GM12878 (cell line): ENCODE measurements at regions of chr11 and their contacts with region 1.

Region 1: GRCh38 chr11:72030472-72031045 is 31.9 kb downstream of the IL18BP start:
- DNase-seq: no peak
- ATAC-seq: no peak
- H3K4me3 ChIP-seq: no peak overlapping the region
- H3K27ac ChIP-seq: no peak overlapping the region
- H3K4me1 ChIP-seq: no peaks in the 10 kb centered on the region
- H3K27me3 ChIP-seq: no peaks in the 10 kb centered on the region
- CTCF ChIP-seq: no peak
- EP300 ChIP-seq: no peak
- POLR2A ChIP-seq: no peak
- RAD21 ChIP-seq: no peak

Region 2: DNA sequence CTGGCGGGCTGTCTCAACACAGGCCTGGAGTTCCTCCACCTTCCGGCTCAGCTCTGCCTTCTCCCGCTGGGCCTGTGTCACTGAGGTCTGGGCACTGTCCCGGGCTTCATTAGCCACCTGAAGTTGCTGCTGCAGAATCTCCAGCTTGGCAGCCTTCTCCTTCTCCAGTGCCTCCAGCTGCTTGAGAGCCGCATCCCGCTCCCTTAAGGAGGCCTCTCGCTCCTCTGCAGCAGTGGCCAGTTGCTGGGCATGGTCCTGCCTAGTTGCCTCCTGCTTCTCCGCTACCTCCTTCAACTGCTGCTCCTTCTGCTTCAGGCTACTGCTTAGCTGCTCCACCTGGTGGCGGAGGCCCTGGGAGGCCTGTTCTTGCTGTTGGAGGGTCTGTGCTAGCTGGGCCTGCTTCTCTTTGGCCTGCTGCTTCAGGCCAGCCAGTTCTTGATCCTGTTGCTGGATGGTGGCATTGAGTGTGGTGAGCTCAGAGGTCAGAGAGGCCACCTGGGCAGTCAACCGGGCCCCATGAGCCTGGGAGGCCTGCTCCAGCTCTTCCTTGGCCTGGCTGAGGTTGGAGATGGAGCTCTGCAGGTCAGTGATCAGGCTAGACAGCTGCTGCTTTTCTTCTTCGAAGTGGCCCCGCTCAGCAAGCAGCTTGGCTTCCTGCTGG is 14.9 kb before region 1 on chr11:
- CTCF ChIA-PET with region 1: interaction called, 16 read pairs
- POLR2A ChIA-PET with region 1: no interaction called
- RAD21 ChIA-PET with region 1: interaction called, 5 read pairs
- SMC1A ChIA-PET with region 1: interaction called, 15 read pairs
- in situ Hi-C with region 1: no loop called
- intact Hi-C with region 1: no loop called
- DNase-seq: no peak
- ATAC-seq: peak; percentile 65
- H3K4me3 ChIP-seq: no peak overlapping the region
- H3K27ac ChIP-seq: no peak overlapping the region
- H3K4me1 ChIP-seq: no peaks in the 10 kb centered on the region
- H3K27me3 ChIP-seq: no peaks in the 10 kb centered on the region
- CTCF ChIP-seq: peak; percentile 40 to 72 (median 62); a peak in 5 of 6 replicates
- EP300 ChIP-seq: no peak
- POLR2A ChIP-seq: no peak
- RAD21 ChIP-seq: peak; percentile 55

Region 3: GRCh38 chr11:72080256-72080974 is 49.9 kb after region 1 on chr11 and contains the starts of genes LRRC51 and NUMA1:
- CTCF ChIA-PET with region 1: interaction called, 43 read pairs
- POLR2A ChIA-PET with region 1: interaction called, 14 read pairs
- RAD21 ChIA-PET with region 1: interaction called, 30 read pairs
- SMC1A ChIA-PET with region 1: interaction called, 62 read pairs
- in situ Hi-C with region 1: no loop called
- intact Hi-C with region 1: no loop called
- DNase-seq: peak; percentile 99
- ATAC-seq: peak; percentile 97
- H3K4me3 ChIP-seq: peak within 1 kb of the TSS; percentile 77
- H3K27ac ChIP-seq: peak within 1 kb of the TSS; percentile 78
- H3K4me1 ChIP-seq: peaks cover 16% of the 10 kb centered on the region
- H3K27me3 ChIP-seq: no peaks in the 10 kb centered on the region
- CTCF ChIP-seq: no peak
- EP300 ChIP-seq: no peak
- POLR2A ChIP-seq: peak; percentile 83
- RAD21 ChIP-seq: no peak
- polyA plus RNA-seq, gene LRRC51: 4.7 to 6.2 TPM
- polyA plus RNA-seq, gene NUMA1: 5.5 to 7.1 TPM

Region 4: GRCh38 chr11:72102946-72103753 is 72.6 kb after region 1 on chr11 and contains the start of gene LAMTOR1:
- CTCF ChIA-PET with region 1: interaction called, 416 read pairs
- POLR2A ChIA-PET with region 1: interaction called, 4 read pairs
- RAD21 ChIA-PET with region 1: interaction called, 4 read pairs
- SMC1A ChIA-PET with region 1: interaction called, 245 read pairs
- in situ Hi-C with region 1: no loop called
- intact Hi-C with region 1: no loop called
- DNase-seq: peak; percentile 97
- ATAC-seq: peak; percentile 97
- H3K4me3 ChIP-seq: peak within 1 kb of the TSS; percentile 94
- H3K27ac ChIP-seq: peak within 1 kb of the TSS; percentile 90
- H3K4me1 ChIP-seq: peaks cover 21% of the 10 kb centered on the region
- H3K27me3 ChIP-seq: no peaks in the 10 kb centered on the region
- CTCF ChIP-seq: peak; percentile 20 to 48 (median 40); a peak in 5 of 6 replicates
- EP300 ChIP-seq: peak in 1 of 2 experiments; percentile 17; a peak in 1 of 4 replicates
- POLR2A ChIP-seq: peak; percentile 94
- RAD21 ChIP-seq: no peak
- polyA plus RNA-seq, gene LAMTOR1: 85.1 to 126 TPM

Region 5: GRCh38 chr11:72179804-72180396 is 149.3 kb after region 1 on chr11:
- CTCF ChIA-PET with region 1: interaction called, 9 read pairs
- POLR2A ChIA-PET with region 1: no interaction called
- RAD21 ChIA-PET with region 1: interaction called, 7 read pairs
- SMC1A ChIA-PET with region 1: interaction called, 5 read pairs
- in situ Hi-C with region 1: no loop called
- intact Hi-C with region 1: loop called (anchors 1 kb)
- DNase-seq: no peak
- ATAC-seq: no peak
- H3K4me3 ChIP-seq: no peak overlapping the region
- H3K27ac ChIP-seq: no peak overlapping the region
- H3K4me1 ChIP-seq: peaks cover 5% of the 10 kb centered on the region; the same call in 1 of the 2 replicates
- H3K27me3 ChIP-seq: no peaks in the 10 kb centered on the region; a peak in 1 of 4 replicates
- CTCF ChIP-seq: no peak
- EP300 ChIP-seq: no peak
- POLR2A ChIP-seq: no peak
- RAD21 ChIP-seq: no peak

Region 6: GRCh38 chr11:72308226-72309073 is 277.9 kb after region 1 on chr11:
- CTCF ChIA-PET with region 1: no interaction called
- POLR2A ChIA-PET with region 1: no interaction called
- RAD21 ChIA-PET with region 1: no interaction called
- SMC1A ChIA-PET with region 1: no interaction called
- in situ Hi-C with region 1: no loop called
- intact Hi-C with region 1: no loop called
- DNase-seq: no peak
- ATAC-seq: peak; percentile 82
- H3K4me3 ChIP-seq: no peak overlapping the region
- H3K27ac ChIP-seq: no peak overlapping the region
- H3K4me1 ChIP-seq: peaks cover 4% of the 10 kb centered on the region
- H3K27me3 ChIP-seq: no peaks in the 10 kb centered on the region
- CTCF ChIP-seq: no peak
- EP300 ChIP-seq: no peak
- POLR2A ChIP-seq: no peak
- RAD21 ChIP-seq: no peak